CD8-positive, alpha-beta T cell (primary cell): ENCODE measurements at regions of chr16 and their contacts with region 1.

Region 1: DNA sequence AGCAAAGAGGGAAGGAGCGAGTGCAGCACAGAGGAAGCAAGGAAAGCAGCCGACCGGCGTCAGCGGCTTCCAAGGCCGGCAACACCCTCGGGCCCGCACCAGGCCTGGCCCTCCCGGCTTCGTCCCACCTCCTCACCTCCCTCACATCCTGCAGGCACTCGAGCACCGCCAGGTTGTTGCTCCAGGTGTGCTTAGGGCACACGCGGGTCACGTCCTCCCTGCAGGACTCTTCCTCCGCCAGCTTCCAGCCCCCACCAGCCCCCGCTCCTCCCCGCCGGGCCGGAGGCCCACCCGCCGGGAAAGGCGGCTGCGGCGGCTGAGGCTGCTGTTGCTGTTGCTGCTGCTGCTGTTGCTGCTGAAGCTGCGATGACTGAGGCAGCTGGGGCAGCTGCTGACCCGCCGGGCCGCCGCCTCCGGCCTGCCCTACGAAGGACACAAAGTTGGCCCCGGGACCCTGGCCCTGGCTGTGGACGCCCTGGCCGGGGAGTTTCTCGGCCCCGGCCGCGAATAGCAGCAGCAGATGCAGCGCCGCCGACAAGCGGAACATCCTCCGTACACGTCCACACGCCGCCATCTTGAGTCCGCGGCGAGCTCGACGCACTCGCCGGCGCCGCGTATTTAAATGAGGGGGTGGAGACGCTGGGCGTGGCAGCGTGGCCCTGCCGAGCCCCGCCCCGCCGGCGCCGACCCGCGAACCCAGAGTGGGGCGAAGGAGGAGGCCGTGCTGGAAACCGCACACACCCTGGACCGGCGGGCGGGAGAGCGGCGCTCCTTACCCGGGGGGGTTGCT is at the start of gene GLG1:
- DNase-seq: peak; percentile 80 to 96 (median 92)
- ATAC-seq: peak; percentile 94
- H3K4me3 ChIP-seq: peak within 1 kb of the TSS; percentile 65 to 80
- H3K4me3 Mint-ChIP-seq: peak within 1 kb of the TSS; percentile 97
- H3K27ac ChIP-seq: peak within 1 kb of the TSS; percentile 90 to 93
- H3K27ac Mint-ChIP-seq: peak within 1 kb of the TSS; percentile 97
- H3K4me1 ChIP-seq: peaks cover 65% of the 10 kb centered on the region
- H3K4me1 Mint-ChIP-seq: peaks cover 64% of the 10 kb centered on the region
- H3K27me3 ChIP-seq: no peaks in the 10 kb centered on the region
- H3K27me3 Mint-ChIP-seq: no peaks in the 10 kb centered on the region
- CTCF ChIP-seq: no peak
- total RNA-seq, gene GLG1: 73.7 to 79.4 TPM

Region 2: DNA sequence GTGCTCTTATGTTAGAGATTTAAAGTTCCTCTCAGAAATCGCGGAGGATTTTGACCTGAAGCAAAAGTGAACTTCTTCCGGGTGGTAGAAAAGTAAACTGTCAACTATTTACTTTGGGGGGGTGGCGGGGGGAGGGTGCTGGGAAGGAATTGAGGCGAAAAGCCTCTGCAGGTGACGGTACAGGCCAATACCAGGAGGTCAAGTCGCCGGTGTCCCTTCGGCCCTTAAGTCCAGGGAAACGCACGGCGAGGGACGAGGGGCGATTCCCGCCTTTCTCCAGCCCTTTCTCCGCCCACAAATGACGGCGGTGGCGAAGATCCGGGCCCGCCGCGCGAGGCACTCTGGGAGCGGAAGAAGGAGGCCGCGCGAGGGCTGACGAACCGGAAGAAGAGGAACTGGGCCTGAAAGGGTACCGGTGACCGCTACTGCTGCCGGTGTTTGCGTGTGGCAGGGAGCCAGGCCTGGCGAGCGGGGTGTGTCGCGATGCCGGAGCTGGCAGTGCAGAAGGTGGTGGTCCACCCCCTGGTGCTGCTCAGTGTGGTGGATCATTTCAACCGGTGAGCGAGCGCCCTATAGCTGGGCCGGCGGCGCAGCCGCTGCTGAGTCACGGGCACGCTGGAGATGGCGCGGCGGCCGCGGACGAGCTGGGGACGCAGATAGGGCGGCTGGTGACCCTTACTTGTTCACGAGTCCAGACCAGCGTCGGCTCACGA is 310.1 kb before region 1 on chr16 and contains the start of gene PSMD7:
- CTCF ChIA-PET with region 1: no interaction called
- POLR2A ChIA-PET with region 1: no interaction called
- intact Hi-C with region 1: loop called (anchors 2 to 5 kb)
- DNase-seq: peak; percentile 77 to 93 (median 89)
- ATAC-seq: peak; percentile 86
- H3K4me3 ChIP-seq: peak within 1 kb of the TSS; percentile 83 to 95
- H3K4me3 Mint-ChIP-seq: peak within 1 kb of the TSS; percentile 95
- H3K27ac ChIP-seq: peak within 1 kb of the TSS; percentile 87 to 97
- H3K27ac Mint-ChIP-seq: peak within 1 kb of the TSS; percentile 99
- H3K4me1 ChIP-seq: peaks cover 25% of the 10 kb centered on the region
- H3K4me1 Mint-ChIP-seq: peaks cover 47% of the 10 kb centered on the region
- H3K27me3 ChIP-seq: no peaks in the 10 kb centered on the region
- H3K27me3 Mint-ChIP-seq: no peaks in the 10 kb centered on the region
- CTCF ChIP-seq: no peak
- total RNA-seq, gene PSMD7: 136 to 137 TPM

Region 3: GRCh38 chr16:74501484-74502479 is 104.9 kb before region 1 on chr16:
- CTCF ChIA-PET with region 1: interaction called, 3 read pairs
- POLR2A ChIA-PET with region 1: interaction called, 5 read pairs
- intact Hi-C with region 1: loop called in 1 of 2 experiments (anchors 5 kb)
- DNase-seq: no peak
- ATAC-seq: no peak
- H3K4me3 ChIP-seq: no peak overlapping the region
- H3K4me3 Mint-ChIP-seq: no peak overlapping the region
- H3K27ac ChIP-seq: no peak overlapping the region
- H3K27ac Mint-ChIP-seq: peak overlapping the region; percentile 58
- H3K4me1 ChIP-seq: no peaks in the 10 kb centered on the region
- H3K4me1 Mint-ChIP-seq: peaks cover 21% of the 10 kb centered on the region
- H3K27me3 ChIP-seq: no peaks in the 10 kb centered on the region
- H3K27me3 Mint-ChIP-seq: no peaks in the 10 kb centered on the region
- CTCF ChIP-seq: no peak

Region 4: DNA sequence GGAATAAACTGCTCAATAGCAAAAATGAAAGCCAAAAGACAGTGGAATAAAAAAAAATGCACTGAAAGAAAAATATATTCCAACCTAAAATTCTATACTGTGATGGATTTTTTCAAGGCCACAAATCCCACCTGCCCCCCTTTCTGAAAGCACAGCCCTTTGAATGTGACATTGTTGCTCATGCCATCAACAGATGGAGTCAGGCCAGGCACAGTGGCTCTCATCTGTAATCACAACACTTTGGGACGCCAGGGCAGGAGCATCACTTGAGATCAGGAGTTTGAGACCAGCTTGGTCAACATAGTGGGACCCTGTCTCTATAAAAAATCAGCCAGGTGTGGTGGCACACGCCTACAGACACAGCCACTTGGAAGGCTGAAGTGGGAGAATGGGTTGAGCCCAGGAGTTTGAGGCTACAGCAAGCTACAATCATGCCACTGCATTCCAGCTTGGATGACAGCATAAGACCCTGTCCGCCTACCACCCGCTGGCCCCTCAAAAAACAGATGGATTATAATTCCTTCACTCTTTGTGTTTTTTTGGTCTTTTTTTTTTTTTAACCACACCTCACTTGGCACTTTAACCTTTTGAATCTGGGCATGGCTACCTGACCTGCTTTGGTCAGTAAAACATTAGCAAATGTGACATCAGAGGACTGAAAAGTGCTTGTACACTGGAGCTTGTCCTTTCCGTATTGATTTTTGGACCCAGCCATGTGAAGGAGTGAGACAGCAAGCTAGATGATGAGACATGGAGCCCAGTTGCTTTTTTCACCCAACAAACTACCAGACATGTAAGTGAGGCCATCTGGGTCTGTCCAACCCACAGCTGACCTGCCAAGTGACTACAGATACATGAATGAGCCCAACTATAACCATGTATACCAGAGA is 36.1 kb before region 1 on chr16:
- CTCF ChIA-PET with region 1: no interaction called
- POLR2A ChIA-PET with region 1: interaction called, 3 read pairs
- intact Hi-C with region 1: loop called in 1 of 2 experiments (anchors 5 kb)
- DNase-seq: no peak
- ATAC-seq: no peak
- H3K4me3 ChIP-seq: no peak overlapping the region
- H3K4me3 Mint-ChIP-seq: no peak overlapping the region
- H3K27ac ChIP-seq: no peak overlapping the region
- H3K27ac Mint-ChIP-seq: peak overlapping the region; percentile 43
- H3K4me1 ChIP-seq: peaks cover 63% of the 10 kb centered on the region
- H3K4me1 Mint-ChIP-seq: peaks cover 76% of the 10 kb centered on the region
- H3K27me3 ChIP-seq: no peaks in the 10 kb centered on the region
- H3K27me3 Mint-ChIP-seq: no peaks in the 10 kb centered on the region
- CTCF ChIP-seq: no peak

Region 5: DNA sequence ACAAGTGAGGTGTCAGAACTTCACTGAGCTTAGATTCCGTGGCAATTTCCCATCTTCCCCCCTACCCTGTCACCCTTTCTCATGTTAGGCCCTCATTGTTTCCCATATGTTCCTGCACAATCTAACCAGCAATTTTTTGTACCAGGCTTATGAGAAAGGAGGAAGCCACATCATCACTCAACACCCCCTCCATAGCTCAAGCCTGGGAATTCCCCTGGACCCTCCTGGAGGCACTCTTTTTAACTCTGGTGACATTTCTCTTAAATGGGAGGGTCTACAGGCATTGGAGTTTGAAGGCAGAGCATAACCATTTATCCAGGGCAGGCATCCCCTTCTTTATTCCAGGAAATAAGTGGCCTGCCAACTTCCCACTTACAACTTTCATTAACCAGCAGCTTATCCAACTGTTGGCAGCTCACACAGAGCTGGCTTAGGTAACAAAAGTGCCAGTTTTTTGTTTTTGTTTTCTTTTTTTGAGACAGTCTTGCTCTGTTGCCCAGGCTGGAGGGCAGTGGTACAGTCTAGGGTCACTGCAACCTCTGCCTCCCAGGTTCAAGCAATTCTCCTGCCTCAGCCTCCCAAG is 10.6 kb after region 1 on chr16:
- CTCF ChIA-PET with region 1: interaction called, 8 read pairs
- POLR2A ChIA-PET with region 1: interaction called, 10 read pairs
- intact Hi-C with region 1: no loop called
- DNase-seq: no peak
- ATAC-seq: no peak
- H3K4me3 ChIP-seq: no peak overlapping the region
- H3K4me3 Mint-ChIP-seq: no peak overlapping the region
- H3K27ac ChIP-seq: no peak overlapping the region
- H3K27ac Mint-ChIP-seq: no peak overlapping the region
- H3K4me1 ChIP-seq: no peaks in the 10 kb centered on the region
- H3K4me1 Mint-ChIP-seq: no peaks in the 10 kb centered on the region
- H3K27me3 ChIP-seq: no peaks in the 10 kb centered on the region
- H3K27me3 Mint-ChIP-seq: no peaks in the 10 kb centered on the region
- CTCF ChIP-seq: no peak

Region 6: DNA sequence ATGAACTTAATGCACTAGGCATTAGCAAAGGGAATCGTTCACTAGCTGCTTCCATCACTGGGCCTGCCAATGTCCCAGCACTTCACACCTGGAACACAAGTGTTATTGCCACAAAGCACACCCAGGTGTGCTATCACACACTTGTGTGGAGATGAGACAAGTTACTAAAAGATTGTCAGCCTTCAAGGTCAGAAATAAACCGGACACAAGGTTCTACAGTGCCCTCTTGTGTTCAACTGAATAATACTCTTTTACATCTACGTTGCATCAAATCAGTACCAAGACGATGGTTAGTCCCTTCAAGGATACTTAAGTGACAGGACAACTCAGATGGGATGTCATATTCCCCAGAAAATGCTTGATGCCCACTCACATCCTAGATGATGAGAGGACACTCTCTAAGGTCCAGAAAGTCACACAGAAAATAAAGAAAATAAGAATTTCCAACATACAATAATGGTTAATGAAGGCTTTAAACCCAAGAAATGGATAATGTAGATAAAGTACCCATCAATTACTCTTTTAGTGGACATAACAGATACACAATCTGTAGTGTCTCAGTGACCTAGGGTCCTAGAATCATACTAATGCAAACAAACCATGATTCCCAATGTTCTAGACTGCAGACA is 16.6 kb after region 1 on chr16:
- CTCF ChIA-PET with region 1: interaction called, 8 read pairs
- POLR2A ChIA-PET with region 1: interaction called, 10 read pairs
- intact Hi-C with region 1: no loop called
- DNase-seq: peak in 2 of 9 experiments; percentile 56 to 69
- ATAC-seq: peak; percentile 38
- H3K4me3 ChIP-seq: no peak overlapping the region
- H3K4me3 Mint-ChIP-seq: no peak overlapping the region
- H3K27ac ChIP-seq: no peak overlapping the region
- H3K27ac Mint-ChIP-seq: no peak overlapping the region
- H3K4me1 ChIP-seq: no peaks in the 10 kb centered on the region
- H3K4me1 Mint-ChIP-seq: peaks cover 2% of the 10 kb centered on the region
- H3K27me3 ChIP-seq: no peaks in the 10 kb centered on the region
- H3K27me3 Mint-ChIP-seq: no peaks in the 10 kb centered on the region
- CTCF ChIP-seq: peak; percentile 65

Region 7: DNA sequence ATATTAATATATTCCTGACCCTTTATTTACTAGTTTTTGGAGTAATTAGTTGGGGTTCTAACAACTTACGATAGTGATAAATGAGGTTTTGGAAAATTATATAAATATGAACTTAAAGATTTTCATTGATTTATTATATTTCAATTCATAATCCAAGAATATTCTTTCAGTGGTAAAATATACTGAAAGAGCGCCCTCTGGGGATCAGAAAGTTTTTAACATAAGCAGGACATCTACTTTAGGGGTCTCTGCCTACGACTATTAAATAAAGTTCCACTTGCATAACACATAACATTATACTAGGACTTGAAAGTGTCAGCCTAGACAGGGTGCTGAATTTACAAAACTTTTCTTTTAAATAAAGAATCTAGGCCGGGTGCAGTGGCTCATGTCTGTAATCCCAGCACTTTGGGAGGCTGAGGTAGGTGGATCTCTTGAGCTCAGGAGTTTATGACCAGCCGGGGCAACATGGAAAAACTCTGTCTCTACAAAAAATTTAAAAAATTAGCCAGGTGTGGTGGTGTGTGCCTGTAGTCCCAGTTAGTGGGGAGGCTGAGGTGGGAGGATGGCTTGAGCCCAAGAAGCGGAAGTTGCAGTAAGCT is 44.4 kb after region 1 on chr16:
- CTCF ChIA-PET with region 1: no interaction called
- POLR2A ChIA-PET with region 1: no interaction called
- intact Hi-C with region 1: no loop called
- DNase-seq: peak in 2 of 9 experiments; percentile 16 to 32
- ATAC-seq: no peak
- H3K4me3 ChIP-seq: no peak overlapping the region
- H3K4me3 Mint-ChIP-seq: no peak overlapping the region
- H3K27ac ChIP-seq: no peak overlapping the region
- H3K27ac Mint-ChIP-seq: no peak overlapping the region
- H3K4me1 ChIP-seq: peaks cover 11% of the 10 kb centered on the region
- H3K4me1 Mint-ChIP-seq: peaks cover 35% of the 10 kb centered on the region
- H3K27me3 ChIP-seq: no peaks in the 10 kb centered on the region
- H3K27me3 Mint-ChIP-seq: no peaks in the 10 kb centered on the region
- CTCF ChIP-seq: peak; percentile 62